AG04450 (cell line): ENCODE measurements at regions of chr7 and their contacts with region 1.

Region 1: GRCh38 chr7:113774182-113774807 is 144.5 kb downstream of the PPP1R3A start:
- DNase-seq: no peak
- H3K4me3 ChIP-seq: no peak overlapping the region
- H3K27ac ChIP-seq: no peak overlapping the region
- H3K27me3 ChIP-seq: no peaks in the 10 kb centered on the region
- CTCF ChIP-seq: peak; percentile 76

Region 2: DNA sequence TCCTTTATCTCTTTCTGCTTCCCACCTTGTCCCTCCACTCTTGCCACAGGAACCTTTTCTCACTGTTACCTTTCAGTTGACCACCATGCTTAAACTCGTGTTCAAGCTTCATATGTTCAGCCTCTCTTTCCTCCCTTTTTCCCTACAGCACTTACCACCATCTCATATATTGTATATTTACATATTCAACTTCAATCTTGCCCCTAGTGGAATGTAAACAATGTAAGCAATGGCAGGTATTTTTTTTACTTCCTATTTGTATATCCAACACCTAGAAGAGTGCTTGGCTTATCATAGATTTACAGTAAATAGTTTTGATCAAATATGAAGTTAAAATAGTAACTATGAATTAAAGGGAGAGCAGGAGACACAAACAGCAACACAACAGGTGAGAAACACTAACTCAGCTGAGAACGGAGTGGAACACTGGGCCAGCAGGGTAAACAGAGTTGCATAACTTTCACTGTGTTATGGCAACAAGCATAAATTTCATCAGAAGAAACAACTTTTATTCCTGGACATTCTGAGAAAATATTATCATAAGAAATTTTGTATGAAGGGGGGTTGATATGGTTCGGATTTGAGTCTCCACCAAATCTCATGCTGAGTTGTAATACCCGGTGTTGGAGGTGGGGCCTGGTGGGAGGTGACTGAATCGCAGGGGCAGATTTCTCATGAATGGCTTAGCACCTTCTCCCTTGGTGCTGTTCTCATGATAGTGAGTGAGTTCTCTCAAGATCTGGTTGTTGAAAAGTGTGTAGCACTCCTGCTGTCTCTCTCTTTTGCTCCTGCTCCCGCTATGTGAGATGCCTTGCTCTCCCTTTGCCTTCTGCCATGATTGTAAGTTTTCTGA is 603.7 kb before region 1 on chr7:
- CTCF ChIA-PET with region 1: no interaction called
- POLR2A ChIA-PET with region 1: no interaction called
- DNase-seq: no peak
- H3K4me3 ChIP-seq: no peak overlapping the region
- H3K27ac ChIP-seq: no peak overlapping the region
- H3K27me3 ChIP-seq: no peaks in the 10 kb centered on the region
- CTCF ChIP-seq: no peak

Region 3: DNA sequence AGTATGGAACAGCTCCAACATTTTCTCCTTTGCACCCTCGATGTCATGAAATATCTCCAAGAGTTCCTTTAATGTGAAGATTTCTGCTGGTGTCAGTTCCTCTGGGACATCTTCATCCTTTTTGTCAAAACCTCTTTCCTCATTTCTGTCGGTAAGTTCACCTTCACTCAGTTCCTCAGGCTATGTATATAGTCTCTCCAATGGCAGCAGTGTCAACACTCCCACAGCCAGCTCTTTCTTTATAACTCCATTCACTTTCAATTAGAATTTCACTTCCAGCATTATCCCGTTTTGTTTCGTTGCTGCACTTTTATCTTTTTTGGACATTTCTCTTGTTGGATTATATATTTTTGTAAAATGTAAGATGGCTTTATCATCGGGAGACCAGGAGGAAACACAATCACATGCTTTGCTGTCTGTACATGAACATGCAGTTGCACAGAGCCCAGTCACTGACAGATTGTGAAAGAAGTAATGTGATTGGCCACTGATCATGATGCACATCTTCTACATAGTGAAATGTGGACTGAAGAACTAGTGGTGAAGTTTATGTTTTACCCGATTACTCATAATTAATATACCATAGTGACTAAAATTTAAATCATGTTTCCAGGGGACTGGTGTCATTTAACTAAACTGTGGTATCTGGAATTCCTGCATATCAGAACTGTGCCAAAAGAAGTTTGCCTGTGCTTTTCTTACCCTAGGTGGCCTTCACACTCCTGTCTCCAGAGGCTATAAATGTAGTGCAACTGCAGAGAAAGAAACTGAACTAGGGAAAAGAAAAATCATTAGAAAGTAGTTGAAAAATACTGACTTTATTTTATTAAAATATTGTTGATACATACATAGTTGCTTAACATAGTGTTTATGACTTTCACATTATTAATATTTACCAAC is 145.1 kb before region 1 on chr7:
- CTCF ChIA-PET with region 1: no interaction called
- POLR2A ChIA-PET with region 1: no interaction called
- DNase-seq: peak; percentile 24
- H3K4me3 ChIP-seq: no peak overlapping the region
- H3K27ac ChIP-seq: no peak overlapping the region
- H3K27me3 ChIP-seq: no peaks in the 10 kb centered on the region
- CTCF ChIP-seq: no peak

Region 4: GRCh38 chr7:113652501-113652900 is 121.8 kb before region 1 on chr7:
- CTCF ChIA-PET with region 1: no interaction called
- POLR2A ChIA-PET with region 1: no interaction called
- DNase-seq: no peak
- H3K4me3 ChIP-seq: no peak overlapping the region
- H3K27ac ChIP-seq: no peak overlapping the region
- H3K27me3 ChIP-seq: no peaks in the 10 kb centered on the region
- CTCF ChIP-seq: no peak

Region 5: GRCh38 chr7:113790025-113790424 is 15.7 kb after region 1 on chr7:
- CTCF ChIA-PET with region 1: interaction called, 15 read pairs
- POLR2A ChIA-PET with region 1: no interaction called
- DNase-seq: no peak
- H3K4me3 ChIP-seq: no peak overlapping the region
- H3K27ac ChIP-seq: no peak overlapping the region
- H3K27me3 ChIP-seq: no peaks in the 10 kb centered on the region
- CTCF ChIP-seq: no peak

Region 6: DNA sequence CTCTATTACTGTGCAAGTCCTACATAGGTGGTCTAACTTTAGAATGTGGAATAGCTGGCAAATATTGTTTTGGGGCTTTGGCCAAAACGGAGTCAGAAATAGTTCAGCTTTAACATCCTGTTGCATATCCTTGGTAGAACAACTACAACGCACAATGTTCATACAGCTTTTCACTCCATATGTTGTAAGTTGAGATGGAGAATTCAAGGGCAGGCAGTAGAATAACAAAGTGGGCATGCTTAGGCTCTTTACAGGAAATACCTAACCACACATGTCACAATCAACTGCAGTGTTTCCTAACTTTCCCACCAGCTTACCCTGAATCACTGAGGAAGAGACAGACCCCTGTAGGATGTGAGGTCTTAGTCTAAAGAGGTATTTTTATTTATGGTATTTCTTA is 22.3 kb after region 1 on chr7:
- CTCF ChIA-PET with region 1: interaction called, 26 read pairs
- POLR2A ChIA-PET with region 1: no interaction called
- DNase-seq: peak; percentile 82
- H3K4me3 ChIP-seq: no peak overlapping the region
- H3K27ac ChIP-seq: peak overlapping the region; percentile 47
- H3K27me3 ChIP-seq: no peaks in the 10 kb centered on the region
- CTCF ChIP-seq: no peak

Region 7: DNA sequence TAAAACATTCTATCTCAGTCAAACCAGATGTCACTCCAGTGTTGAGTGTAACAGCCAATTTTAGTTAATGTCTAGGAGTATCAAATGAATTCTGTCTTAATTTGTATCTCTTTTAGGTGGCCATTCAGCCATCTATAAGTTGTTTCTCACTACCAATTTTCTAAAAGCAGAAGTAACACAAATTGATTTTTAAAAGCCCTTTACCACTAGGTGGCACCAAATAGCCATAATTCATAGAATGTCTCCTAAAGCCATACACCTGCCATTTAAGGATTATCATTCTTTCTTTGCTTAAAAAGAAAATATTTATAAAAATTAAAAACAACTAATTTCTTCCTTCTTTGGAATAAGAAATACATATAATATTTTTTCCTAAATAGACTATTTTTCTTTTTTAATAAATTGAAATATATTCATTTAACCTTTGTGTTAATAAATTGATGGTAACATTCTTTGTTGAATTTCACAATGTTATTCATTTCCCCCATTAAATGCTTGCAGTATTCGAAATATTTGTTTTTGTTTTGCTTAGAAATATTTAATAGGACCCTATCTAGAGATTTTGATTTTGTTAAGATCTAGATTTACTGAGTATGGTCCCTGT is 252.3 kb after region 1 on chr7:
- CTCF ChIA-PET with region 1: interaction called, 11 read pairs
- POLR2A ChIA-PET with region 1: no interaction called
- DNase-seq: peak; percentile 24
- H3K4me3 ChIP-seq: no peak overlapping the region
- H3K27ac ChIP-seq: no peak overlapping the region
- H3K27me3 ChIP-seq: no peaks in the 10 kb centered on the region
- CTCF ChIP-seq: peak; percentile 63